ENCODE measurements at regions of chr11 and their contacts with region 1.

Region 1: GRCh38 chr11:4531676-4532075 is 13.3 kb upstream of the OR52M1 start:
- DNase-seq: no peak
- H3K4me3 ChIP-seq: no peak overlapping the region
- H3K27ac ChIP-seq: no peak overlapping the region
- H3K4me1 ChIP-seq: no peaks in the 10 kb centered on the region
- H3K27me3 ChIP-seq: no peaks in the 10 kb centered on the region
- CTCF ChIP-seq: no peak
- POLR2A ChIP-seq: no peak

Region 2: GRCh38 chr11:4589017-4589416 is 57.3 kb after region 1 on chr11:
- intact Hi-C with region 1: loop called (anchors 2 kb)
- DNase-seq: no peak
- H3K4me3 ChIP-seq: no peak overlapping the region
- H3K27ac ChIP-seq: no peak overlapping the region
- H3K4me1 ChIP-seq: no peaks in the 10 kb centered on the region
- H3K27me3 ChIP-seq: peaks cover 0 to 6% of the 10 kb centered on the region in 2 donors
- CTCF ChIP-seq: no peak
- POLR2A ChIP-seq: no peak